Naive thymus-derived CD4-positive, alpha-beta T cell (primary cell): ENCODE measurements at regions of chr18 and their contacts with region 1.

Region 1: DNA sequence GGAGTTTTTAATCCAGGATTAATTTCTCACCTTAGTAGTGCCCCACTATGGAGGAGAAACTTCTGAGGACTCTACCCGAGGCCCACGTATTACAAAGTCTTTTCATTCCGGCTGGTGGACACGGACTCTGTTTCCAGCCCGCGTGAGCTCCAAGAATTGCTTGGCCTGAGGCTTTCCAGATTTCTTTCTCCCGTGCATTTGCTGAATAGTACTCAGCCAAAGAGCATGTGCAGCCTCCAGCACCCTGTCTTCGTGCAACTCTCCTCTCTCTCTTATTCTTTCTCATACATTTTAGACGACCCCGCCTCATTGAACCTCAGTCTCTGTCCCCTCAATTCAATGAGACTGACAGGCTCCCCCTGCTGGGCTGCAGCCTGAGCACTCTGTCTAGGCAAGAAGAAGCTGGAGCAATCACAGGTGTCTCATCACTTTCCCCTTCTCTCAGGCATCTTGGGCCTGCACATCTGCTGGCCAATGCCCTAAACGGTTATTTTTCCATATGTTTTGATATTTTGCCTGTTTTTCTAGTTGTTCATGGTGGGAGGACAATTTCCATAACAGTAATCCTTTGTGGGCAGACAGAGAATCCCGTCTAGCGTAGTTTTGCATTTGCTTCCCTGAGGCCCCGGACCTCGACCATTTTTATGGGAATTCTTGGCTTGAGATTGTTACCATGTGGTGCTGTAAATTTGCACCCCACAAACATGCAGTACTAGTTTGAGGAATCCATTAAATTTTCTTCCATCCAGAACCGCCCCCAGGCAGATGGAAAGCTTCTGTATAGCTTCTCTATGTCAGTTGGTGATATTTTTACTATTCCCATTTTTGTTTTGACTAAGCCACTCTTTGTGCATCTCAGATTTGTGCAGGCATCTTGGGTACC is 50.1 kb upstream of the LPIN2 start:
- DNase-seq: peak; percentile 47 to 76 (median 67)
- ATAC-seq: peak; percentile 59
- H3K4me3 ChIP-seq: peak overlapping the region; percentile 55
- H3K4me3 Mint-ChIP-seq: peak overlapping the region; percentile 56 to 83 (median 77)
- H3K27ac ChIP-seq: peak overlapping the region; percentile 96
- H3K27ac Mint-ChIP-seq: peak overlapping the region; percentile 91 to 99 (median 96)
- H3K4me1 ChIP-seq: peaks cover 60 to 70% of the 10 kb centered on the region in 2 donors
- H3K4me1 Mint-ChIP-seq: peaks cover 46 to 74% (median 71%) of the 10 kb centered on the region in 7 donors
- H3K27me3 ChIP-seq: no peaks in the 10 kb centered on the region
- H3K27me3 Mint-ChIP-seq: no peaks in the 10 kb centered on the region

Region 2: DNA sequence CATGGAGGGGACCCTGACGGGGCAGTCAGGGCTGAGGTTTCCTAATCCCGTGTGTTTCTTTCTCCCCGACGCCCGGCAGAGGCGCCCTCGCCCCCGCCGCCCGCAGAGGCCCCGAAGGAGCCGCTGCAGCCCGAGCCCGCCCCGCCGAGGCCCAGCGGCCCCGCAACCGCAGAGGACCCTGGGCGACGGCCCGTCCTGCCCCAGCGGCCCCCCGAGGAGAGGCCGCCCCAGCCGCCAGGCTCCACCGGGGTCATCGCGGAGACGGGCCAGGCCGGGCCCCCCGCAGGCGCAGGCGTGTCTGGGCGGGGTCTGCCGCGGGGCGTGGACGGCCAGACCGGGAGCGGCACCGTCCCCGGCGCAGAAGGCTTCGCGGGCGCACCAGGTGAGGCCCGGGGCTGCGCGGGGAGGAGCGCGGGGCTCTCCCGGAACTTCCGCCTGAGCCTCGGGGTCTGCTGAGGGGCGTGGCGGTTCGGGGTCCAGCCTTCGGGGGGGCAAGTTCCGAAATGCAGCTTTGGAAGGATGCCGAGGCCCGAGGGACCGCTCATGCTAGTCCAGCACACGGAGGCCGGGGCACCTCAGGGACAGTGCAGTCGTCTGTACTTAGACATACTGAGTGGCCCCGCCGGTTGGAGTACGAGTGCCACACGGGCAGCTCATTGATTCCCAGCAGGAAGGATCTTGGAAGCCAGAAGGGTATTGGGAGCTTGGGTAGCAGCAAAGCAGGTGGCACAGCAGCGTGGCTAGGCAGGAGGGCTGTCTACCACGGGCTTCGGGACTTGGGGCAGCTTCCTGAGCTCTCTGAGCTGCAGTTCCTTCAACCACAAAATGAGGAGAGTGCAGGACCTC is 156.1 kb before region 1 on chr18:
- CTCF ChIA-PET with region 1: no interaction called
- POLR2A ChIA-PET with region 1: no interaction called
- intact Hi-C with region 1: no loop called
- DNase-seq: peak; percentile 33 to 76 (median 50)
- ATAC-seq: peak; percentile 79
- H3K4me3 ChIP-seq: peak overlapping the region; percentile 64
- H3K4me3 Mint-ChIP-seq: peak overlapping the region; percentile 76 to 90 (median 84)
- H3K27ac ChIP-seq: peak overlapping the region; percentile 66
- H3K27ac Mint-ChIP-seq: peak overlapping the region; percentile 49 to 90 (median 76)
- H3K4me1 ChIP-seq: peaks cover 9 to 11% of the 10 kb centered on the region in 2 donors
- H3K4me1 Mint-ChIP-seq: peaks cover 0 to 32% (median 24%) of the 10 kb centered on the region in 7 donors
- H3K27me3 ChIP-seq: no peaks in the 10 kb centered on the region
- H3K27me3 Mint-ChIP-seq: no peaks in the 10 kb centered on the region

Region 3: DNA sequence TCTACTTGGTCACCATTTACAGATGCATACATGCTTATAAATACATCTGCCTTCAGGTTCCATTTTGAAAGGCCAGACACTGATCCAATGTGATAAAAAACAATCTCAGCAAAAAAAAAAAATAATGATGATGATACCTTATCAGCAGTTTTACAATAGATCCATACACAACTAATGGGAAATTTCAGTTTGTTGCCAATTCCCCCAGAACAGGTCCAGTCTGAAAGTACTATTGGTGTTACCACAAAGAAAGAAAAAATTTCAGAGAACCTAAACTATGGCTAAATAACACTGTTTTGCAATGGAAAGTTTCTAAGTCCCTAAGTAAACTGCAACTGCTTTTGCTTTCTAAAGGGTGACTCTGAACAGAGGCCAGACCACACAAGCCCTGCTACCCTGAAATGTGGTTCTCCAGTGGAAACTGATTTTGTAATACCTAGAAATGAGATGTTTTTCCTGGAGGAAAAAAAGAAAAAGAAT is 104.2 kb before region 1 on chr18:
- CTCF ChIA-PET with region 1: interaction called, 4 read pairs
- POLR2A ChIA-PET with region 1: interaction called, 15 read pairs
- intact Hi-C with region 1: loop called (anchors 1 kb)
- DNase-seq: peak in 1 of 9 donors; percentile 61
- ATAC-seq: no peak
- H3K4me3 ChIP-seq: peak overlapping the region; percentile 8
- H3K4me3 Mint-ChIP-seq: peak overlapping the region; percentile 1 to 85 (median 66)
- H3K27ac ChIP-seq: peak overlapping the region; percentile 68
- H3K27ac Mint-ChIP-seq: peak overlapping the region; percentile 96 to 100 (median 99)
- H3K4me1 ChIP-seq: peaks cover 83 to 85% of the 10 kb centered on the region in 2 donors
- H3K4me1 Mint-ChIP-seq: peaks cover 46 to 97% (median 93%) of the 10 kb centered on the region in 7 donors
- H3K27me3 ChIP-seq: no peaks in the 10 kb centered on the region
- H3K27me3 Mint-ChIP-seq: no peaks in the 10 kb centered on the region

Region 4: GRCh38 chr18:2994603-2995432 is 68.2 kb before region 1 on chr18:
- CTCF ChIA-PET with region 1: interaction called, 226 read pairs
- POLR2A ChIA-PET with region 1: interaction called, 176 read pairs
- intact Hi-C with region 1: loop called (anchors 1 kb)
- DNase-seq: peak; percentile 57 to 83 (median 77)
- ATAC-seq: peak; percentile 92
- H3K4me3 ChIP-seq: peak overlapping the region; percentile 35
- H3K4me3 Mint-ChIP-seq: peak overlapping the region; percentile 41 to 80 (median 68)
- H3K27ac ChIP-seq: peak overlapping the region; percentile 62
- H3K27ac Mint-ChIP-seq: peak overlapping the region; percentile 54 to 91 (median 84)
- H3K4me1 ChIP-seq: peaks cover 38 to 47% of the 10 kb centered on the region in 2 donors
- H3K4me1 Mint-ChIP-seq: peaks cover 48 to 87% (median 83%) of the 10 kb centered on the region in 7 donors
- H3K27me3 ChIP-seq: no peaks in the 10 kb centered on the region
- H3K27me3 Mint-ChIP-seq: no peaks in the 10 kb centered on the region

Region 5: GRCh38 chr18:3074087-3074486 is 11.0 kb after region 1 on chr18:
- CTCF ChIA-PET with region 1: interaction called, 13 read pairs
- POLR2A ChIA-PET with region 1: interaction called, 47 read pairs
- intact Hi-C with region 1: no loop called
- DNase-seq: no peak
- ATAC-seq: no peak
- H3K4me3 ChIP-seq: no peak overlapping the region
- H3K4me3 Mint-ChIP-seq: no peak overlapping the region
- H3K27ac ChIP-seq: no peak overlapping the region
- H3K27ac Mint-ChIP-seq: peak overlapping the region in 4 of 9 donors; percentile 2 to 61 (median 48)
- H3K4me1 ChIP-seq: peaks cover 7 to 10% of the 10 kb centered on the region in 2 donors
- H3K4me1 Mint-ChIP-seq: peaks cover 11 to 41% (median 32%) of the 10 kb centered on the region in 7 donors
- H3K27me3 ChIP-seq: no peaks in the 10 kb centered on the region
- H3K27me3 Mint-ChIP-seq: no peaks in the 10 kb centered on the region

Region 6: GRCh38 chr18:3129053-3129864 is 66.2 kb after region 1 on chr18:
- CTCF ChIA-PET with region 1: interaction called, 29 read pairs
- POLR2A ChIA-PET with region 1: interaction called, 4 read pairs
- intact Hi-C with region 1: loop called (anchors 1 to 2 kb)
- DNase-seq: peak; percentile 64 to 83 (median 77)
- ATAC-seq: peak; percentile 100
- H3K4me3 ChIP-seq: no peak overlapping the region
- H3K4me3 Mint-ChIP-seq: peak overlapping the region in 1 of 10 donors; percentile 33
- H3K27ac ChIP-seq: no peak overlapping the region
- H3K27ac Mint-ChIP-seq: peak overlapping the region in 4 of 9 donors; percentile 5 to 49 (median 16)
- H3K4me1 ChIP-seq: peaks cover 0 to 7% of the 10 kb centered on the region in 2 donors
- H3K4me1 Mint-ChIP-seq: peaks cover 7 to 10% (median 9%) of the 10 kb centered on the region in 7 donors
- H3K27me3 ChIP-seq: no peaks in the 10 kb centered on the region
- H3K27me3 Mint-ChIP-seq: peaks cover 0 to 3% (median 0%) of the 10 kb centered on the region in 5 donors

Region 7: DNA sequence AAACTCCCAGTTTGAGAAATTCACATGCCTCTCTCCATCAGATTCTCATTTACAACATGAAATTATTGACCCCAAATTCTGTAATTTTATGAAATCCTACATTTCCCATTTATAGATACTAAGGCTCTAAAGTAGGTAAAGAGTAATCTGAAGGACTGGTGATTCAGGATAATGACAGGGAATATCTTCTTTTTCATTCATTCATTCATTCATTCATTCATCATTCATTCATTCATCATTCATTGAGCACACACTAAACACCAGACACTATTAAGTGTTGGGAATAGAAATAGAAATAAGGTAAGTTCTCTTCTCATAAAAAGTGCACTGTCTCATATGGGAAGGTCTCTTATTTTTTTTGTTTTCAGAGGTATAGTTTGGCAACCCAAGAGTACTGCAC is 503.8 kb after region 1 on chr18:
- CTCF ChIA-PET with region 1: no interaction called
- POLR2A ChIA-PET with region 1: no interaction called
- intact Hi-C with region 1: no loop called
- DNase-seq: no peak
- ATAC-seq: no peak
- H3K4me3 ChIP-seq: no peak overlapping the region
- H3K4me3 Mint-ChIP-seq: no peak overlapping the region
- H3K27ac ChIP-seq: no peak overlapping the region
- H3K27ac Mint-ChIP-seq: no peak overlapping the region
- H3K4me1 ChIP-seq: no peaks in the 10 kb centered on the region
- H3K4me1 Mint-ChIP-seq: no peaks in the 10 kb centered on the region
- H3K27me3 ChIP-seq: no peaks in the 10 kb centered on the region
- H3K27me3 Mint-ChIP-seq: no peaks in the 10 kb centered on the region

Region 8: DNA sequence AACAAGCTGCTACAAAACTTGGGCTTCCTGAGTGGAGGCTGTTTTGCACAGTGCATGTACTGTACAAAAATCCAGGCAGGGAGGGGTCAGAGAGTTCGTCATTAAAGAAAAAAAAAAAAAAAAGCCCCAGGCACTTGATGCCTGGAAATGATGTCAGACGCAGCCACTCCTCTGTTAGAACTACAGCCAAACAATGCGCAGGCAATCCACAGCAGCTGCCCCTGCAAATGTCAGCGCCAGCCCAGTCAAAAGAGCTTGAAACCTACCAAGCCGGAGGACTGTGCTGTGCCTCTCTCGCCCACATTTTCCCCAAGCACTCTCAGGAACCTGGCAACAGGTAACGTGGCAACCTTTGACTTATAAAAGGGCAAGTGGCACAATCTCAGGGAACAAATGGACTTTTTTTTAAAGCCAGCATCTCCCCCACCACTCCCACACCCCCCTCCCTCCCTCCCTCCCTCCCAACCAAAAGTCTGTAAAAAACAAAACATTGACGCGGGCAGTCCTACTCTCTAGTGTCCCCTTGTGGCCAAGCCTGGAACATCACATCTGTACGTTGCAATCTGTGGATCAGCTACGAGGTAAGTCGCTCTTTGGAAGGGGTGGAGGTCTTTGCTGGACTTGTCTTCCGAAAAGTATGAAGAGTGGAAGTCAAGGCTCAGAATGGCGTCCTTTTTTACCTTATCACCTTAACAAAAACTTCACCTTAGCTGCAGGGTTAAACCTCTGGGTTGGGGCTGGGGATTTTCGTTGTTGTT is 531.0 kb after region 1 on chr18:
- CTCF ChIA-PET with region 1: no interaction called
- POLR2A ChIA-PET with region 1: no interaction called
- intact Hi-C with region 1: loop called (anchors 5 kb)
- DNase-seq: peak; percentile 71 to 96 (median 93)
- ATAC-seq: peak; percentile 82
- H3K4me3 ChIP-seq: peak overlapping the region; percentile 73
- H3K4me3 Mint-ChIP-seq: peak overlapping the region; percentile 84 to 97 (median 93)
- H3K27ac ChIP-seq: peak overlapping the region; percentile 89
- H3K27ac Mint-ChIP-seq: peak overlapping the region; percentile 98 to 100 (median 99)
- H3K4me1 ChIP-seq: peaks cover 31 to 40% of the 10 kb centered on the region in 2 donors
- H3K4me1 Mint-ChIP-seq: peaks cover 32 to 66% (median 57%) of the 10 kb centered on the region in 7 donors
- H3K27me3 ChIP-seq: no peaks in the 10 kb centered on the region
- H3K27me3 Mint-ChIP-seq: no peaks in the 10 kb centered on the region